Heart right ventricle (tissue), 16 donors: ENCODE measurements at regions of chr5 and their contacts with region 1.

Region 1: DNA sequence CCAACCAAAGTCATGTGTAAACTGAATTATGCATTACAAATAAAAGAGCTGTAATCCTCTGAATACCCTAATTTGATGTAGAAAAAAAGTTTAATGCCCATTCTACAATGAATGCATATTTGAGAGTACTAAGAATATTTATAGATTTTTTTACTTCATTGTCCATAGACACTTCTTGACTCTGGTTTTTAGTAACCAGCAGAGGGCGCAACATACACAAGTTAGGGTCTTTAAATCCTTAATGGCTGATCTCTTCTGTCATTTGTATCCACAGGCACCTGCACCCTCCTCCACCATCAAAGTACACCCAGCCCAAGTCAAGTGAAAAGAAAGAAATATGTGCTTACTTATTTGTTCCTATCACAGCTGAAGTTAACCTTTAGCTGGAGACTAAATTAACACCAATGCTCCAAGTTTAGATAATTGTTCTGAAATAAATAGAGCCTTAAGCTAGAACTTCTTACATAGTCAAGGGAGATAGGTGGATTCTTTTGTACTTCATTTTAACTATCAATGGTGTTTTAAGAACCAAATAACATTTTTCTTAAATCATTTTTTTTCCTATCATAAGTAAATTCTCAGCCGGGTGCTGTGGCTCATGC is 524.2 kb upstream of the DAB2 start:
- DNase-seq: peak in 1 of 2 donors; percentile 64
- ATAC-seq: peak in 7 of 8 donors; percentile 66 to 79 (median 73)
- H3K4me3 ChIP-seq: no peak overlapping the region
- H3K27ac ChIP-seq: no peak overlapping the region
- H3K4me1 ChIP-seq: peaks cover 0 to 24% (median 0%) of the 10 kb centered on the region in 9 donors
- H3K27me3 ChIP-seq: no peaks in the 10 kb centered on the region
- CTCF ChIP-seq: peak; percentile 59 to 81 (median 74)

Region 2: GRCh38 chr5:39578887-39579497 is 370.0 kb before region 1 on chr5:
- intact Hi-C with region 1: loop called in 1 of 10 experiments (anchors 5 kb)
- DNase-seq: no peak
- ATAC-seq: no peak
- H3K4me3 ChIP-seq: no peak overlapping the region
- H3K27ac ChIP-seq: no peak overlapping the region
- H3K4me1 ChIP-seq: peaks cover 0 to 13% (median 9%) of the 10 kb centered on the region in 9 donors
- H3K27me3 ChIP-seq: peaks cover 0 to 5% (median 0%) of the 10 kb centered on the region in 7 donors
- CTCF ChIP-seq: peak; percentile 59 to 82 (median 75)

Region 3: DNA sequence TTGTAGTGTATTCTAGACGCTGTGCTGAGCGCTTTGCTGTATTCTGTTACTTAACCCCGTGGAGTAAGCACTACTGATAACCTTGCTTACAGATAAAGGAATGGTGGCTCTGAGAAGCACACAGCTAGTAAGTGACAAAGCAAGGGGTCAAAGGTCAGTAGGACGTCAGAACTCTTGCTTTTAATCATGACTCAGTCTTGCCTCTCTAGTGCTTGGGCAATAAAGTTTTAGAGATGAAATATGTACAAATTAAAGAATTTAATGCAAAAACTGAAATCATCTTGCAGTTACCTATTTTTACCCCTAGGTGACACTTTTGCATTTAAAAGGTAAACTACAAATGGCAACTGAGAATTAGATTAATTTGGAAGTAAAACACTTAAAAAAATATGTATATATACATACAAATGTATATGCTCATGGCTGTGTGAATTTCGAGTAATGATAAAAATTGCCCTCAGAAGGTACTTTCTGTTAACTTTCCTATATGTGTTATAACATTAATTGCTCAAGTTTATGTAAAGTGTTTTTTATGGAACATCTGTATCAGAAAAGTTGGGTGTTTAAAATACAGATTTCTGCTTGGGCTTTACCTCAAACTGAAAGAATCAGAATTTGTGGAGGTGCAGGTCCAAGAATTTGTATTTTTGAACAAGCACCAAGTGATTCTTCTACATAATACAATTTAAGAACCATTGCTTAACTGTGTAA is 349.1 kb before region 1 on chr5:
- intact Hi-C with region 1: loop called in 1 of 10 experiments (anchors 10 kb)
- DNase-seq: no peak
- ATAC-seq: peak in 1 of 8 donors; percentile 17
- H3K4me3 ChIP-seq: no peak overlapping the region
- H3K27ac ChIP-seq: no peak overlapping the region
- H3K4me1 ChIP-seq: no peaks in the 10 kb centered on the region
- H3K27me3 ChIP-seq: peaks cover 0 to 7% (median 0%) of the 10 kb centered on the region in 7 donors
- CTCF ChIP-seq: peak in 8 of 9 donors; percentile 37 to 56 (median 46)